ENCODE measurements at regions of chr5 and their contacts with region 1.

Region 1: GRCh38 chr5:169039592-169039991 is 261.3 kb downstream of the SLIT3 start:
- DNase-seq: no peak
- ATAC-seq: no peak
- H3K4me3 ChIP-seq: no peak overlapping the region
- H3K4me3 Mint-ChIP-seq: no peak overlapping the region
- H3K27ac ChIP-seq: no peak overlapping the region
- H3K27ac Mint-ChIP-seq: no peak overlapping the region
- H3K4me1 ChIP-seq: no peaks in the 10 kb centered on the region
- H3K4me1 Mint-ChIP-seq: no peaks in the 10 kb centered on the region
- H3K27me3 ChIP-seq: no peaks in the 10 kb centered on the region
- H3K27me3 Mint-ChIP-seq: peaks cover 0 to 22% (median 4%) of the 10 kb centered on the region in 5 donors

Region 2: DNA sequence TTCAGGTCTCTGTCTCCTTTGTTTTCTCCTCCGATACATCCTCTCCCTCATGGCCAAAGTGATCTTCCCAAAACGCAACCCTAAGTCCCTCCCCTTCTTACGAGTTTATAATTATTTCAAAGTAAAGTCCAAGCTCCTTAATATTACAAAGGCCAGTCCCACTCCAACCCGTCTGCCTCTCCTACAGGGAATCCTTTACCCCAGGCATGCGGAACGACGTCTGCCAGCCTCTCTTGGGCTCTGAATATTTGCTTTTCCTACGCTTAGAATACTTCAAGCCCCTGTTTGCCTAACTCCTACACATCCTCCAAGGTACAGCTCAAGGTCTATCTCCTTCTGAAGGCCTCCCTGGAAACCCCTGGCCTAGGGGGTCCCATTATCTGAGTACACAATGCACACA is 14.9 kb after region 1 on chr5:
- CTCF ChIA-PET with region 1: no interaction called
- POLR2A ChIA-PET with region 1: no interaction called
- intact Hi-C with region 1: loop called in 1 of 2 experiments (anchors 1 kb)
- DNase-seq: no peak
- ATAC-seq: no peak
- H3K4me3 ChIP-seq: no peak overlapping the region
- H3K4me3 Mint-ChIP-seq: no peak overlapping the region
- H3K27ac ChIP-seq: no peak overlapping the region
- H3K27ac Mint-ChIP-seq: no peak overlapping the region
- H3K4me1 ChIP-seq: no peaks in the 10 kb centered on the region
- H3K4me1 Mint-ChIP-seq: no peaks in the 10 kb centered on the region
- H3K27me3 ChIP-seq: no peaks in the 10 kb centered on the region
- H3K27me3 Mint-ChIP-seq: peaks cover 4 to 21% (median 12%) of the 10 kb centered on the region in 5 donors

Region 3: GRCh38 chr5:169164481-169164925 is 124.9 kb after region 1 on chr5:
- CTCF ChIA-PET with region 1: no interaction called
- POLR2A ChIA-PET with region 1: no interaction called
- intact Hi-C with region 1: no loop called
- DNase-seq: no peak
- ATAC-seq: no peak
- H3K4me3 ChIP-seq: no peak overlapping the region
- H3K4me3 Mint-ChIP-seq: no peak overlapping the region
- H3K27ac ChIP-seq: no peak overlapping the region
- H3K27ac Mint-ChIP-seq: no peak overlapping the region
- H3K4me1 ChIP-seq: no peaks in the 10 kb centered on the region
- H3K4me1 Mint-ChIP-seq: no peaks in the 10 kb centered on the region
- H3K27me3 ChIP-seq: no peaks in the 10 kb centered on the region
- H3K27me3 Mint-ChIP-seq: peaks cover 0 to 11% (median 5%) of the 10 kb centered on the region in 5 donors